H1 (cell line): ENCODE measurements at regions of chr22 and their contacts with region 1.

Region 1: DNA sequence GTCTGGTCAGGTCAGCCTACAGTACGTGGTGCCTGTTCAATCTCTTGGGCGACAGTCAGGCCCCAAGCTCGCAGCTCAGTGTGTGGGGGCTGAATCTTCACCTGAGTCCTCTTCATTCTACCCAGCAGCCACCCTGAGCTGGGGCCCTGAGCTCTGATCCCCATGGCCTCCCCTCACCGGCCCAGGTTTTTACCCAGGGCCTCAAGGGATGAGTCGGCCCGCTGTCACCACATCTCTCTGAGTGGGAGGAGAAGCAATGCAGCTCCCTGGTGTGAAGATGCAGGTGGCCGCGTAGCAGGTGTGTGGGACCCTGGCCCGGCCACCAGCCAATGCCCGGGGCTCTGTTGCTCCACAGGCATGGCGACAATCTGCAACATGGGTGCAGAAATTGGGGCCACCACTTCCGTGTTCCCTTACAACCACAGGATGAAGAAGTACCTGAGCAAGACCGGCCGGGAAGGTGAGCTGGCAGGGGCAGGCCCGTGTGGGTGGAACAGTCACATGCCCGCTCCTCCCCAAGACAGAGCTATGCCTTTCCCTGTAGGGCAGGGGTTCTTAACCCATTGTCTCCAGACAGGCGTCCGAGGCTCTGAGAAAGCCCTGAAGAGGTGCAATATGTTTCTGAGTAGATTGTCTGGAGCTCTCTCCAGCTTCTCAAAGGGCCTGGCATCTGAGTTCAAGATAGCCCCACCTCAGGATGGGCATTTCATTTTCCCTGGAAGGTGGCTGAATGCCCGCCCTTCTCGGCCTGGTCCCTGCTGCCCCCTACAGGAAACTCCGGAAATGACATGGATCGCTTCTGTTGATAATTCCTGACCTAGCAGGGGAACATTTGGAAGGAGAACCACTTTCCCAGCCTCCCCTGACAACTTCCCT is 26.9 kb downstream of the POLR3H start:
- DNase-seq: peak in 1 of 2 experiments; percentile 98
- H3K4me3 ChIP-seq: no peak overlapping the region
- H3K27ac ChIP-seq: no peak overlapping the region
- H3K4me1 ChIP-seq: peaks cover 4 to 12% (median 9%) of the 10 kb centered on the region in 4 experiments
- H3K27me3 ChIP-seq: no peaks in the 10 kb centered on the region
- CTCF ChIP-seq: peak; percentile 86 to 91 (median 91)
- EP300 ChIP-seq: no peak
- POLR2A ChIP-seq: no peak
- RAD21 ChIP-seq: peak; percentile 96 to 97

Region 2: DNA sequence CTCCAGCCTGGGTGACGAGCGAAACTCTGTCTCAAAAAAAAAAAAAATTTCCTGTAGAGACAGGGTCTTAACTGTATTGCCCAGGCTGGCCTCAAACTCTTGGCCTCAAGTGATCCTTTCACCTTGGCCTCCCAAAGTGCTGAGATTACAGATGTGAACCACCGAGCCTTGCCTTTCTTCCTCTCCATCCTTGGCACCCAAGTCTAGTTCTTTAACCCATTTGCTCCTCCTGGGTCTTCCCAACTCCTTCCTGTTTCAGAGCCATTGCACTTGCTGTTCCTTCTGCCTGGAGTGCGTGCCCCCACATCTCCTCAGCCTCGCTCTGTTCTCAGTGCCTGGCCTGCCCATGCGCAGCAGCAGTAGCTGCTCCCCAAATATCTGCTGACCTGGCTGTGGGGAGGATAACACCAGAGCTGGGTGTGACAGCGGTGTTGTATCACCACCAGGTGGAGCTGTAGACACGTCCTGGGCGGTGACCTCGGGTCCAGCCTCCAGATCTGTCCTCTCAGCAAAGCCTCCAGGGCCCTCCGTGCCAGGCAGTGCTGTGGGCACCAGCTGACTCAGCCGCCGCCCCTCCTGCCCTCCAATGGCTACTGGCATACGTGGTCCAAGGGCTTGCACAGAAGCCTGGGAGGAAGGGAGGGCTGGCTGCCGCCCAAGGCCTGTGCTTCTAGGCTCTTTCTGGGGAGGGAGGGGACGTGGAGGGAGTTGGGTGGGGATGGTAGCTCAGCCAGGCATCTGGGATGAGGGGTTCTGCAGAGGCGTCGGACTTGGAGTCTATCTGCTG is 113.7 kb before region 1 on chr22:
- CTCF ChIA-PET with region 1: interaction called, 269 read pairs
- POLR2A ChIA-PET with region 1: interaction called, 15 read pairs
- DNase-seq: peak; percentile 66 to 90
- H3K4me3 ChIP-seq: no peak overlapping the region
- H3K27ac ChIP-seq: no peak overlapping the region
- H3K4me1 ChIP-seq: peaks cover 0 to under 1% (median 0%) of the 10 kb centered on the region in 4 experiments; a peak in 1 of 7 replicates
- H3K27me3 ChIP-seq: no peaks in the 10 kb centered on the region
- CTCF ChIP-seq: peak; percentile 95 to 100 (median 99)
- EP300 ChIP-seq: no peak
- POLR2A ChIP-seq: no peak
- RAD21 ChIP-seq: peak; percentile 99

Region 3: GRCh38 chr22:41458161-41458728 is 59.2 kb before region 1 on chr22:
- CTCF ChIA-PET with region 1: interaction called, 57 read pairs
- POLR2A ChIA-PET with region 1: interaction called, 6 read pairs
- DNase-seq: no peak
- H3K4me3 ChIP-seq: no peak overlapping the region
- H3K27ac ChIP-seq: no peak overlapping the region
- H3K4me1 ChIP-seq: no peaks in the 10 kb centered on the region
- H3K27me3 ChIP-seq: no peaks in the 10 kb centered on the region
- CTCF ChIP-seq: no peak
- EP300 ChIP-seq: no peak
- POLR2A ChIP-seq: no peak
- RAD21 ChIP-seq: no peak

Region 4: DNA sequence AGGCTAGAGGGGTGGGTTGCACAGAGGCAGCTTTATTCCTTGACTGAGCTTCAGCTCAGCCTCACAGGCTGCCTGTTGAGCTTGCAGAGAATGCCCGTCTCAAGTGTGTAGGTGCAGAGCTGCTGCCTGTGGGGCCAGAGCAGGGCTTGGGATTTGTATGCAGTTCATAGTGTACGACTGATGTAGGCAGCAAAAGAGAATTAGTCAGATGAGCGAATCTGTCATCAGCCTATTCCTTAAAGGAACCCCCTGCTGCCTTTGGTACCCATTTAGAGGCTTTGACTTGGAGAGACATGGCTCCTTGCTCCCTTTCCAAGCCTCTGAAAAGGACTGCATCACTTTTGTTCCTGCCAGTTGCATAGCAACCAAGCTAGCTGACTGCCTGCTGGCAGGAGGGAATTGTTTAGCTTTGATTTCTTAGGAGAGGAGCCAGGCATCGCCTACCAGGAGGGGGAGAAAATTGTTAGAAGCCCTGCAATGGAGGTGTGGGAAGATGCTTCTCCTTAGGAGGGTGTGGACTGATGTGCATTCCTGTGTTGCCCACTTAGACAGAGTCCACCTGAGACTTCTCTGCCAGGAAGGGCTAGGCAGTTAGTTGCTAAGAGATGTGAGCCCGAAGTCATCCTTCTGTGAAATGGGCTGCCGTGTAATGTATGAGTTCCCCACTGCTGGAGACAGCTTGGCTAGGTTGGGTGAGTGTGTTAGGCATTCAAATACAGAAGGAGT is 37.6 kb before region 1 on chr22:
- CTCF ChIA-PET with region 1: interaction called, 79 read pairs
- POLR2A ChIA-PET with region 1: interaction called, 5 read pairs
- DNase-seq: peak; percentile 21 to 61
- H3K4me3 ChIP-seq: peak overlapping the region in 2 of 4 experiments; percentile 0 to 11; a peak in 2 of 8 replicates
- H3K27ac ChIP-seq: peak overlapping the region; percentile 20; the same call in 1 of the 2 replicates
- H3K4me1 ChIP-seq: peaks cover 24 to 39% (median 26%) of the 10 kb centered on the region in 4 experiments
- H3K27me3 ChIP-seq: no peaks in the 10 kb centered on the region
- CTCF ChIP-seq: peak in 2 of 3 experiments; percentile 28 to 41; a peak in 2 of 4 replicates
- EP300 ChIP-seq: no peak
- POLR2A ChIP-seq: no peak
- RAD21 ChIP-seq: peak; percentile 17 to 21; a peak in 2 of 4 replicates

Region 5: DNA sequence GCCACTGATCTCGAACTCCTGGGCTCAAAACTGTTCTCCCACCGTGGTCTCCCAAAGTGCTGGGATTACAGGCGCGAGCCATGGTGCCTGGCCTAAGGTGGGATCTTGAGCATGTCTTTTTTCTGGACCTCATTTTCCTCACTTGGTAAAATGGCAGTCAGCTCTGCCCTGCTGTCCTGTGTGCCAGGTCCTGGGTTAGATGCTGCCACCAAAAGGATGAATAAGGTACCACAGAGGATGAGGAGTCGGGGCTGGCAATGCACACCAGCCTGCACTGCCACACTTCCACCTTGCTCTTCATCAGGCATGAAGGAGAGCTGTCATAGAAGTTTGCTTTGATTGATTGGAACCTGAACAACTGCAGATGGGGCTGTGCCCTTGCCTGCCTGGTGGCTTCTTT is 16.2 kb before region 1 on chr22:
- CTCF ChIA-PET with region 1: interaction called, 218 read pairs
- POLR2A ChIA-PET with region 1: interaction called, 3 read pairs
- DNase-seq: no peak
- H3K4me3 ChIP-seq: no peak overlapping the region
- H3K27ac ChIP-seq: no peak overlapping the region
- H3K4me1 ChIP-seq: no peaks in the 10 kb centered on the region
- H3K27me3 ChIP-seq: no peaks in the 10 kb centered on the region
- CTCF ChIP-seq: peak; percentile 57 to 64 (median 59)
- EP300 ChIP-seq: no peak
- POLR2A ChIP-seq: no peak
- RAD21 ChIP-seq: peak; percentile 75 to 78

Region 6: GRCh38 chr22:41551877-41552582 is 34.6 kb after region 1 on chr22:
- CTCF ChIA-PET with region 1: interaction called, 13 read pairs
- POLR2A ChIA-PET with region 1: no interaction called
- DNase-seq: no peak
- H3K4me3 ChIP-seq: no peak overlapping the region
- H3K27ac ChIP-seq: no peak overlapping the region
- H3K4me1 ChIP-seq: peaks cover 0 to 2% (median 1%) of the 10 kb centered on the region in 4 experiments; a peak in 3 of 7 replicates
- H3K27me3 ChIP-seq: no peaks in the 10 kb centered on the region
- CTCF ChIP-seq: no peak
- EP300 ChIP-seq: no peak
- POLR2A ChIP-seq: no peak
- RAD21 ChIP-seq: no peak

Region 7: GRCh38 chr22:42127606-42128005 is 610.2 kb after region 1 on chr22:
- CTCF ChIA-PET with region 1: no interaction called
- POLR2A ChIA-PET with region 1: no interaction called
- DNase-seq: no peak
- H3K4me3 ChIP-seq: no peak overlapping the region
- H3K27ac ChIP-seq: no peak overlapping the region
- H3K4me1 ChIP-seq: no peaks in the 10 kb centered on the region
- H3K27me3 ChIP-seq: no peaks in the 10 kb centered on the region
- CTCF ChIP-seq: no peak
- EP300 ChIP-seq: no peak
- POLR2A ChIP-seq: no peak
- RAD21 ChIP-seq: no peak